Sigmoid colon (tissue), 7 donors: ENCODE measurements at regions of chr2 and their contacts with region 1.

Region 1: DNA sequence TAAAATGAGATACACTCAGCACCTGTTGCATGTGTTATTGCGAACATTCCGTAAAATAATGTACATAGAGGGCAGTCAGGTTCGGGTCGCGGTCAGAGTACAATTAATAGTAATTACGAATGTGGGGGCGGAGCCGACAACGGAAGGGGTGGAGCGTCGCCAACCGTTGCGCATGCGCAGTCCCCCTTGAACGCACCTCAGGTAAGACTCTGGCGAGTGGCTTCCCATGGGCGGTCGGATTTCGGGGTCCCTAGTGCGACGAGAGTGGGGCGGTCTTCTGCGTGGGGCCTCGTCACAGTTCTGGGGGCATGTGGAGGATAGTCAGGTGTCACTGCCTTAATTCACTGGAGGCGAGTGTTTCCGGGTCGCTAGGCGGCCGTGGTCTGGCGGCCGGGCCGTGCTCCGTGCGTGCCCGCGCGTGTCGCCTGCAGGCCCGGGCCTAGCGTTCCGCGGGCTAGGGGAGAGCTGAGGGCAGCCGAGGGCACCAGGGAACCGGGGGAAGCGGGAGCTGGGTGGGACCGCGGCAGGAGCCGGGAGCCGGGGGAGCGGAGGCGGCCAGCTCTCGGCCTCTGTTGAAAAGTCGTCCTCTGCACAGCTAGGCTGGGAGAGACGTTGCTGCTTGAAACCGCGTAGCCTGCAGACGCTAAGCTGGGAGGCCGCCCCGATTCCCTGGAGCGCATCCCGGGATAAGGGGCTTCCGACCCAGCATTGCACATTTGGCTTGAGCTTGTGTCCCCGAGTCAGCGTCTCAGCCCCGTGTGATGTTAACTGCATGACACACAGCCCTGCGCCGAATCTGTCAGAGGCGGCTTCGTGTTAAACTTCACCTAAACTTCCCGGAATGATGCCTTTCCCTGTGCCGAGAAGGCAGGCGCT is at the start of gene CEBPZOS:
- DNase-seq: peak; percentile 90
- H3K4me3 ChIP-seq: peak within 1 kb of the TSS; percentile 81 to 91 (median 84)
- H3K27ac ChIP-seq: peak within 1 kb of the TSS; percentile 89 to 94 (median 91)
- H3K4me1 ChIP-seq: peaks cover 0 to 15% (median 12%) of the 10 kb centered on the region in 4 donors
- H3K27me3 ChIP-seq: no peaks in the 10 kb centered on the region
- CTCF ChIP-seq: no peak
- EP300 ChIP-seq: no peak
- POLR2A ChIP-seq: peak; percentile 64 to 77
- total RNA-seq, gene CEBPZOS: 23.0 to 42.2 (median 38.1) TPM

Region 2: GRCh38 chr2:37156857-37157714 is 39.5 kb before region 1 on chr2 and contains the start of gene EIF2AK2:
- intact Hi-C with region 1: loop called (anchors 5 kb)
- DNase-seq: peak; percentile 94
- H3K4me3 ChIP-seq: peak within 1 kb of the TSS; percentile 86 to 99 (median 94)
- H3K27ac ChIP-seq: peak within 1 kb of the TSS; percentile 88 to 96 (median 92)
- H3K4me1 ChIP-seq: peaks cover 0 to 21% (median 16%) of the 10 kb centered on the region in 4 donors
- H3K27me3 ChIP-seq: no peaks in the 10 kb centered on the region
- CTCF ChIP-seq: no peak
- EP300 ChIP-seq: no peak
- POLR2A ChIP-seq: no peak
- total RNA-seq, gene EIF2AK2: 26.9 to 38.5 (median 34.2) TPM